Prostate gland (tissue), 2 donors: ENCODE measurements at regions of chr1 and their contacts with region 1.

Region 1: DNA sequence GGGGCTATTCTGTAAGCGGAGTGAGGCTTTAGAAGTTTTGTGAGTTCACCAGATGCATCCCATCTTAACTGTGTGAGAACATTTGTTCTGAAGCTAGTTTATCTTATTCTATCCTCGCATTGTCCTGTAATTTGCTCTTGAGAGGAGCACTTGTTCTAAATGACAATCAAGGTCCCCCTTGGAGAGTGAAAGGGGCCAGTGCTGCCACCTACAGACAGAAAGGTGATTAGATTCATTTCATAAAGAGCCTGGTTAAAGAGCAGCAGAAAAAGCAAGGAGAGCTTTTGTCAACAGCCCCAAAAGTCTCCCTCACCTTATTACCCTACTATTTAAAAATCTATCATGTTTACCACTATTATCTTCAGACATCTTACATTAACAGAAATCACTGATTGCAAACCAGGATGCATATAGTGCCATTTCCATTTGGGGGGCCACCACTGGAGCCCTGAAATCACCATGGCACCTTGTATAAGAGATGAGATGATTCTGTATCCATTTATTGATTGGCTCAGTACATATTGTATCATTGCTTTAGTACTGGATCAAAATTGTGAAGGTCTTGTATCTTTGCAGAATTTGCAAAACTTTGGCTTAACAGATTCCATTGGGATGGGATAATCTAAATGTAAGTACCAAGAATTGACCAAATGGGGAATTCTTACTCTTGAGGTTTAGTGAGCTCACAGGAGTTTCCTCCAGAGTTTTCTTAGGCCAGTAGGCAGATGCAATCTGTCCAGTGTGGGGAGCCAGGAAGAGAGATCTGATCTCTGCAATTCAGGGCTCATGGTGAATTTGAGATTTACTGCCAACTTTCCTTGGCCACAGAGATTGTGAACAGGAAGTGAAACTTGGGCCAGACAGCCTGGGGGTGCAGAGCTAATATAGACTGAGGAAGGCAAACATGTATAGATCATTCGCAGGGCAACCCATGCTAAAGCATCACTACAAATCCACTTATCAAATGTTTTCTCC is 64.3 kb upstream of the TRABD2B start:
- DNase-seq: peak; percentile 59
- H3K4me3 ChIP-seq: no peak overlapping the region
- H3K27ac ChIP-seq: no peak overlapping the region
- H3K4me1 ChIP-seq: no peaks in the 10 kb centered on the region
- H3K27me3 ChIP-seq: no peaks in the 10 kb centered on the region
- CTCF ChIP-seq: peak in 3 of 4 experiments; percentile 56 to 68 (median 62)
- POLR2A ChIP-seq: no peak

Region 2: GRCh38 chr1:47738560-47739182 is 322.8 kb before region 1 on chr1:
- intact Hi-C with region 1: loop called (anchors 5 kb)
- DNase-seq: peak; percentile 53
- H3K4me3 ChIP-seq: no peak overlapping the region
- H3K27ac ChIP-seq: no peak overlapping the region
- H3K4me1 ChIP-seq: no peaks in the 10 kb centered on the region
- H3K27me3 ChIP-seq: no peaks in the 10 kb centered on the region
- CTCF ChIP-seq: peak in 3 of 4 experiments; percentile 70 to 88 (median 72)
- POLR2A ChIP-seq: no peak

Region 3: GRCh38 chr1:47997289-47998200 is 63.9 kb before region 1 on chr1 and contains the start of gene TRABD2B:
- intact Hi-C with region 1: loop called (anchors 5 kb)
- DNase-seq: peak; percentile 71
- H3K4me3 ChIP-seq: peak within 1 kb of the TSS; percentile 48 to 54
- H3K27ac ChIP-seq: peak within 1 kb of the TSS; percentile 58 to 65
- H3K4me1 ChIP-seq: no peaks in the 10 kb centered on the region
- H3K27me3 ChIP-seq: peaks cover 3% of the 10 kb centered on the region
- CTCF ChIP-seq: peak; percentile 83 to 98 (median 91)
- POLR2A ChIP-seq: no peak
- total RNA-seq, gene TRABD2B: 1.1 to 2.1 TPM